Esophagus muscularis mucosa (tissue), 4 donors: ENCODE measurements at regions of chr19 and their contacts with region 1.

Region 1: DNA sequence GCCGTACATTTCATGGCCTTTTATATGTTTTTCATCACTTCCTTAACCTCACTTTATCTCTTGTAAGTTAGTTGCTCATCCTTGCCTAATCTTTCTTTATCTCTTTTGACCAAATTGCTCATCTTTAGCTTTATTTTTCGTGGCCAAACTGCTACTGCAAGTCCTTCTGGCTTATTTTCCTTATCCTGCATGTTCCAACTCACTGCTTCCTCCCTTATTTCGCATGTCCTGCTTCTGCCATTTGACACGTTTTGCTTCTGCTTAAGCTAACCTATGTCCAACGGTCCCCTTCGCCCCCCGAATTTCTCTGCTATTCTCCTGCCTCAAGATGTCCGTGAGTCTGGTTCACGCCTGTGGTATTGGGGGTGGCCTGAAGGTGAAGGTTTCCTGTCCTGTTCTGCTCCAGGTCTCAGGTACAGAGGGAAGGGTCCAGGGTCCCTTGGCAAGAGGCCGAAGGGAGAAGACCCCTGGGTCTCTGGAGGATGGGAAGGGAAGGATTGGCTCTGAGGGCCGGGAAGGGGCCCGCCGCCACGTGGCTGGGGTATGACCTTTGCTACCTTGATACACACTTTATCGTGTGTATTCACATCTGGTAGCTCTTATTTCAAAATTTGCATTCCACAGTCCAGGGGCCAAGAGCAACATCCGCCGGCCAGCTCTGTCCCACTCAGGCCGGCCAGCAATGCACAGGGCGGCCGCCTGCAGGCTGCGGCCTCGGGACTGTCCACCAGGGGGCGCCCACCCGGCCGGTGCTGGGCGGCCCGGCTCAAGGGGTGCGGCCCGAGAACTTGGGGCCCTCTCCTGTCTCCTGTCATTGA is 2.9 kb upstream of the C19orf85 start:
- DNase-seq: no peak
- H3K4me3 ChIP-seq: no peak overlapping the region
- H3K27ac ChIP-seq: peak overlapping the region in 1 of 4 donors; percentile 42
- H3K4me1 ChIP-seq: peaks cover 8 to 15% (median 12%) of the 10 kb centered on the region in 4 donors
- H3K27me3 ChIP-seq: no peaks in the 10 kb centered on the region
- CTCF ChIP-seq: peak in 2 of 3 experiments; percentile 96 to 97
- EP300 ChIP-seq: no peak
- POLR2A ChIP-seq: no peak

Region 2: GRCh38 chr19:55391702-55392615 is 75.5 kb before region 1 on chr19:
- intact Hi-C with region 1: no loop called
- DNase-seq: no peak
- H3K4me3 ChIP-seq: no peak overlapping the region
- H3K27ac ChIP-seq: no peak overlapping the region
- H3K4me1 ChIP-seq: peaks cover 26 to 51% (median 44%) of the 10 kb centered on the region in 4 donors
- H3K27me3 ChIP-seq: no peaks in the 10 kb centered on the region
- CTCF ChIP-seq: no peak
- EP300 ChIP-seq: no peak
- POLR2A ChIP-seq: no peak

Region 3: GRCh38 chr19:55407800-55408532 is 59.5 kb before region 1 on chr19:
- intact Hi-C with region 1: no loop called
- DNase-seq: peak; percentile 100
- H3K4me3 ChIP-seq: peak overlapping the region; percentile 87 to 98 (median 97)
- H3K27ac ChIP-seq: peak overlapping the region; percentile 97 to 99 (median 98)
- H3K4me1 ChIP-seq: peaks cover 14 to 28% (median 25%) of the 10 kb centered on the region in 4 donors
- H3K27me3 ChIP-seq: no peaks in the 10 kb centered on the region
- CTCF ChIP-seq: no peak
- EP300 ChIP-seq: no peak
- POLR2A ChIP-seq: no peak

Region 4: GRCh38 chr19:55503502-55504251 is 36.2 kb after region 1 on chr19:
- intact Hi-C with region 1: loop called (anchors 1 kb)
- DNase-seq: peak; percentile 98
- H3K4me3 ChIP-seq: peak overlapping the region; percentile 57 to 62 (median 61)
- H3K27ac ChIP-seq: peak overlapping the region; percentile 78 to 90 (median 86)
- H3K4me1 ChIP-seq: peaks cover 8 to 22% (median 14%) of the 10 kb centered on the region in 4 donors
- H3K27me3 ChIP-seq: no peaks in the 10 kb centered on the region
- CTCF ChIP-seq: peak; percentile 99 to 100 (median 99)
- EP300 ChIP-seq: no peak
- POLR2A ChIP-seq: no peak